ENCODE measurements at regions of chr1 and their contacts with region 1.

Region 1: GRCh38 chr1:31644560-31645273 is at the start of gene PEF1:
- DNase-seq: peak; percentile 99
- H3K4me3 Mint-ChIP-seq: peak within 1 kb of the TSS; percentile 96
- H3K27ac Mint-ChIP-seq: peak within 1 kb of the TSS; percentile 100
- H3K4me1 Mint-ChIP-seq: peaks cover 34% of the 10 kb centered on the region
- H3K27me3 Mint-ChIP-seq: no peaks in the 10 kb centered on the region
- total RNA-seq, gene PEF1: 50.4 to 50.5 TPM

Region 2: GRCh38 chr1:31633053-31633452 is 11.7 kb before region 1 on chr1:
- CTCF ChIA-PET with region 1: interaction called, 13 read pairs
- POLR2A ChIA-PET with region 1: interaction called, 16 read pairs
- DNase-seq: peak; percentile 33
- H3K4me3 Mint-ChIP-seq: no peak overlapping the region
- H3K27ac Mint-ChIP-seq: no peak overlapping the region
- H3K4me1 Mint-ChIP-seq: peaks cover 10% of the 10 kb centered on the region
- H3K27me3 Mint-ChIP-seq: no peaks in the 10 kb centered on the region